ENCODE measurements at regions of chr20 and their contacts with region 1.

Region 1: DNA sequence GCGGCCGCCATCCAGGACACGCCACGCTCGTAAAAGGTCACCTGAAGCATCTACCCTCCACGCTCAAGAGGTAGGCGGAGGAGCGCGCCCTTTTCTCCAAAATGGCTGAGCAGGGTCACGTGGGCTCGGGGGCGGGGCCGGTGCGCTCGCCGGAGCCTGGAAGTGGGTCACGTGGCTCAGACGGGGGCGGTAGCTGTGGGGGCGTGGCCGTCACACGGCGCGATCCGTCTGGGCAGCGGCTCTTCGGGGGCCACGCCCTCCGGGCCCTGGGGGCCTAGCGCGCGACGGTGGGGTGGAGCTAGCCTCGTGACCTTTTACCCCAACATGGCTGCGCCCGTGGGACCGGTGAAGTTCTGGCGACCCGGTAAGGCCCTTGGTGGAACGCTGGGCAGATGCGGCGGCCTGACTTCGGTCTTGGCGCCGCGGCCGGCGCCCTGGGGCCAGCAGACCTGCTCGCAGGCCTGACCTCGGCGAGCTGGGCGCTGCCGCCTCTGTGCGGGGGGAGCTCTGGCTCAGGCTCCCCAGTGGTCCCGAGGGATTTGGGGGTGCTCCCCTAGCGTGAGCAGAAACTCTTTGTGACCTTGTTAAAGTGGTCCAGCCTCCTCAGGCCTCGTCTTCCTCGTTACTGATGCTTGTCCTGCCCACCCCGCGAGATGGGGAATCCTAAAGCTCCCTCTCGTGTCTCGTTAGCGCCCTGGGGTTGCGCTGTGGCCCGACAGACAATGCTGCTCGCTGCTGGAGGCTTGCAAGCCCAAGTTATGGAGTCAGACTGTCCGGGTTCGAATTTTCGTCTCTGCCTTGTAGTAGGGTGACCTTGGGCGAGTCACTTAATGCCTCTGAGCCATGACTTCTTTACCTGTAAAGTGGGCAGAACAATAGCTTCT is at the start of gene DHX35:
- DNase-seq: peak; percentile 99

Region 2: DNA sequence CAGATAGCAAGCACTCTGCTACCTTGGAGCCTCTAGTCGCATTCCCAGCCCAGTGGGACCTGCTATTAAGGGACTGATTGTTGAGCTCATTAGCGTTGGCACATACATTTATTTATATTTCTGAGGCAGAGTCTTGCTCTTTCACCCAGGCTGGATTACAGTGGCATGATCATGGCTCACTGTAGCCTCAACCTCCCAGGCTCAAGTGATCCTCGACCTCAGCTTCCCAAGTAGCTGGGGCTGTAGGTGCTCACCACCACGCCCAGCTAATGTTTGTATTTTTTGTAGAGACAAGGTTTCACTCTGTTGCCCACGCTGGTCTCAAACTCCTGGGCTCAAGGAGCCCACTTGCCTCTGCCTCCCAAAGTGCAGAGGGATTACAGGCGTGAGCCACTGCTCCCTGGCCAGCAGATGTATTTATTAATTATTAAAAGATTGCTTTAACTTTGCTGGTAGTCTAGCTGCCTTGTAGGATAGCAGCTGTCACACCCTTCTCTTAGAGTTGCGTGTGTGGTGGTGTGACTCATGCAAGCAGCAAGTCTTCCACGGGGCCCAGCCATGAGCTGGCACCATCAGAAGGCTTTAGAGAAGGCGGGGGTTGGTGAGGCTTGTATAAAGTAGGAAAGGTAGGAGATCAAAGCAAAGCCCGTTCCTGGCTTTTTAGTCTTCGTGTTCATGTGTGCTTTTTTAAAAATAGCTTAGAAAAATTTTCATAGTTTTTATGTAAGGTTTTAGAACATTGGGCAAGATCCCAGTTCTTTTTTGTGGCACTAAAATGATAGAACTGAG is 197.5 kb before region 1 on chr20:
- CTCF ChIA-PET with region 1: no interaction called
- POLR2A ChIA-PET with region 1: no interaction called
- DNase-seq: no peak

Region 3: GRCh38 chr20:38926934-38927616 is 35.2 kb before region 1 on chr20:
- CTCF ChIA-PET with region 1: interaction called, 3 read pairs
- POLR2A ChIA-PET with region 1: interaction called, 14 read pairs
- DNase-seq: no peak

Region 4: DNA sequence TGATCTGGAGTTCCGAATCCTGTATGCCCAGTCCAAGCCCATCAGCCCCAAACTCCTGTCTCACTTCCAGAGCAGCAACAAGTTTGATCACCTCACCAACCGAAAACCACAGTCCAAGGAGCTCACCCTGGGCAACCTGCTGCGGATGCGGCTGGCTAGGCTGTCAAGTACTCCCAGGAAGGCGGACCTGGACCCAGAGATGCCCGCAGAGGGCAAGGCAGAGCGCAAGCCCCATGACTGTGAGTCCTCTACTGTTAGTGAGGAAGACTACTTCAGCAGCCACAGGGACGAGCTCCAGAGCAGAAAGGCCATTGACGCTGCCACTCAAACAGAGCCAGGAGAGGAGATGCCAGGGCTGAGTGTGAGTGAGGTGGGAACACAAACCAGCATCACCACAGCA is 10.7 kb before region 1 on chr20:
- CTCF ChIA-PET with region 1: no interaction called
- POLR2A ChIA-PET with region 1: interaction called, 15 read pairs
- DNase-seq: no peak

Region 5: GRCh38 chr20:38973645-38974044 is 11.4 kb after region 1 on chr20:
- CTCF ChIA-PET with region 1: no interaction called
- POLR2A ChIA-PET with region 1: interaction called, 10 read pairs
- DNase-seq: no peak

Measured in HEK293T (cell line).